Left cardiac atrium (tissue), 4 donors: ENCODE measurements at regions of chr5 and their contacts with region 1.

Region 1: DNA sequence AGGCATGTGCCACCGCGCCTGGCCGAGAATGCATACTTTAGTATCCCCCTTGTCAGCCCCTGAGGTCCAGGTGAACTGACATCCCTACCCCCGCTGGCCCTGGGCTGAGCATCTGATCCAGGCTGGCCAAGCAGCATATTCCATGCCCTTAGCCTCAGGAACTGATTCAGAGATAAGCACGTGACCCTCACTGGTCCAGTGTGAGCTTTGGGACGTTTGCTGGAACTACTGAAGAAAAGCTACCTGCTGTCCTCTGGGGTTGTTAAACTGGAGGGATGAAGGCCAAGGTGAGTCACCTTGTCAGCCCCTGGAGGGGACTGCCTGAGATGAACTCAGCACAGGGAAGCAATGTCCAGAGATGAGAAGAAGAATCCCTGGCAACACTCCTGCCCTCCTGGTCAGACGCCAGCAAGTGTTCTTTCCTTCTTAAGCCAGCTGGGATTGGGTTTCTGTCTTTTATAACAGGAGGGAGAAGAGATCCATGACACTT is 59.1 kb upstream of the FBXW11 start:
- DNase-seq: no peak
- ATAC-seq: peak in 1 of 2 donors; percentile 57

Region 2: GRCh38 chr5:171614971-171615653 is 450.4 kb before region 1 on chr5:
- intact Hi-C with region 1: no loop called
- DNase-seq: no peak
- ATAC-seq: peak; percentile 47 to 57

Region 3: DNA sequence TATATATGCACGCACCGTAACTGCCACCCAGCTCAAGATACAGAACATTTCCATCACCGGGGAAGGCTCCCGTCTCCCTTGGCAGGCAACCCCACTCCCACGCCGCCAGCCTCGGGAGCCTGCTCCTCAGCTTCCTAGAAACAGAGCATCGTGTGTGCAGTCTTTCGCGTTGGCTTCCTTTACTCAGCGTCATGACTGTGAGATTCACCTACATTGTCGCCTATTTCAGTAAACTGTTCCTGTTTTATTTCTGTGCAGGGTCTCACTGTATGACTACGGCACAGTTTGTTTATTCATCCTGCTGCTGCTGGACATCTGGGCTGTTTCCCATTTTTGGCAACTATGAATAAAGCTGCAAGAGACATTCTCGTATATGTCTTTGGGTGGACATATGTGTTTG is 31.8 kb after region 1 on chr5:
- intact Hi-C with region 1: loop called in 1 of 2 experiments (anchors 2 kb)
- DNase-seq: no peak
- ATAC-seq: no peak